ENCODE measurements at regions of chr21 and their contacts with region 1.

Region 1: DNA sequence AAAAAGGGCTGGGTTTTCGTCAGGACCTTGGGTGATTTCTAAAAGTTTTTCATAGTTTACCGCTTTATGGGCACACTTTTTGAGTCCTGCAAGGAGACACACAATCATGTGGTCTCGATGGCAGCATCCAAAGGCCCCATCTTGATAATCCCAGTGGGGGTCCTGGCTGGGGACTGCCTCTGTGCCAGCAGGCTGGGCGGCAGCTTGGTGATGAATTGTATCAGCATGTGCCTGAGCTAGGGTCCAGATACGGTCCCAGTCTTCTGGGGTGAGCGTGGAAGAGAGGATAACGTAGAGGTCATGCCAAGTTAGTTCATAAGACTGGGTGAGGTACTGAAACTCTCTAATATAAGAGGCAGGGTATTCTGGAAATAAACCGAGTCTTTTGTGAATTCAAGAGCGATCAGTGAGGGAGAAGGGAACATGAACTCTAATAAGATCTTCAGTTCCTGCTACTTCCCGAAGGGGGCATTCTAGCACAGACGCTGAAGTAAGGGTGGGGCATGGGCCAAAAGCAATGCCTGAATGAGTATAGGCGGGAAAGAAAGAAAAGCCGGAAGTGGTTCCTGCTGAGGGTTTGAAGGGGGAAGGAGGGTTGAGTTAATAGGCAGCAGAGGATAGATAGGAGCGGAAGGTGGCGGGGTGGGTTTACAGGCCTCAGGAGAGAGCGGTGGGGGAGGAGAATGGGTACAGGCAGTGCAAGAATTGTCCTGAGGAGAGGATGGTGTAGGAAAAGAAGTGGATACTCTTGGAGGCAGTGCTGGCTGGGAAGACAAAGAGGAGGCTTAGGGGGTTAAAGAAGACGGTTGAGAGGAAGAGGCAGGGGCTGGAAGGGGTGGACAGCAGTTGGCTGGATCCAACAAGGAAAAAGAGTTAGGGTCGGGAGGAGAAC is 1.6 kb downstream of the ERVH48-1 start:
- DNase-seq: peak; percentile 77 to 82
- H3K4me3 ChIP-seq: no peak overlapping the region
- H3K27ac ChIP-seq: no peak overlapping the region
- H3K4me1 ChIP-seq: peaks cover 5 to 6% of the 10 kb centered on the region in 2 donors
- H3K27me3 ChIP-seq: no peaks in the 10 kb centered on the region
- CTCF ChIP-seq: peak; percentile 40 to 98 (median 86)
- POLR2A ChIP-seq: no peak

Region 2: DNA sequence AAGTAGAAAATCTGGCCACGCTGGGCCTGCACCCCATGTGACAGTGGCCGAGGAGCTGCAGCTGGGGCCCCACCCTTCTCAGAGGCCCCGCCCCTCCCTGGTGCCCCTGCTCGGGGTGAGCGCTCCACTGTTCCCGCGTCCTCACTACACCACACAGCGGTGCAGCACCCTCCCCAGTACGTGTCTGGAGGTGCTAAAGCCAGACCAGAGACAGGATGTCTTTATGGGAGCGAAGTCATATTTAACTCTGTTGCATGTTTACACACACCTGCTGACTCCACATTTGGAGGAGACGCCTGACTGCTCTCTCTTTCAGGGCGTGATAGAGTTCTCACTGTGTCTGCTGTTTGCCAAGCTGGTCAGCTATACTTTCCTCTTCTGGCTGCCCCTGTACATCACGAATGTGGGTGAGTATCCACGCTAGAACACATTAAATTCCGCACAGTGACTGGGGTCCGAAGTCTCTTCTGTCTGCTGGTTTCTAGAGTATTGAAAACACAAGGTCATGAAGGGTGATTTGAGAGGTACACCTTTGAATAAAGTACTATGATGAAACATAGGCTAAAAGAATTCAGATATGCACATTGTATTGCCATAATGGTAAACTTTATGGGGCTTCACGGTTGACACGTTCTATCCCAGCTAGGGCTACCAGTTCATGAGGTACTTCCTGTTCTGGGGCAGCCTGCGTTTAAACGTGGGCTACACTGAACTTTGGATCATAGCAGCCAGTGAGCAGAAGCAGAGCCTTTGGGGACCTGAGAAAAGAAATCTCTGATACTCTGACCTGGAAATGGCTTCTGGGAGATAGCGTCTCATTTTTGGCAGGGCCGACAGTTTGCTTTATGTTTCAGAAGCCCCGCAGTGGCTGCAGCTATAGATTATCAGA is 361.8 kb before region 1 on chr21:
- intact Hi-C with region 1: no loop called
- DNase-seq: no peak
- H3K4me3 ChIP-seq: no peak overlapping the region
- H3K27ac ChIP-seq: no peak overlapping the region
- H3K4me1 ChIP-seq: peaks cover 6% of the 10 kb centered on the region in 2 donors
- H3K27me3 ChIP-seq: no peaks in the 10 kb centered on the region
- CTCF ChIP-seq: no peak
- POLR2A ChIP-seq: no peak

Region 3: GRCh38 chr21:42781150-42781970 is 142.4 kb before region 1 on chr21:
- intact Hi-C with region 1: no loop called
- DNase-seq: peak; percentile 58 to 72
- H3K4me3 ChIP-seq: no peak overlapping the region
- H3K27ac ChIP-seq: no peak overlapping the region
- H3K4me1 ChIP-seq: peaks cover 3 to 29% of the 10 kb centered on the region in 2 donors
- H3K27me3 ChIP-seq: no peaks in the 10 kb centered on the region
- CTCF ChIP-seq: no peak
- POLR2A ChIP-seq: no peak

Region 4: DNA sequence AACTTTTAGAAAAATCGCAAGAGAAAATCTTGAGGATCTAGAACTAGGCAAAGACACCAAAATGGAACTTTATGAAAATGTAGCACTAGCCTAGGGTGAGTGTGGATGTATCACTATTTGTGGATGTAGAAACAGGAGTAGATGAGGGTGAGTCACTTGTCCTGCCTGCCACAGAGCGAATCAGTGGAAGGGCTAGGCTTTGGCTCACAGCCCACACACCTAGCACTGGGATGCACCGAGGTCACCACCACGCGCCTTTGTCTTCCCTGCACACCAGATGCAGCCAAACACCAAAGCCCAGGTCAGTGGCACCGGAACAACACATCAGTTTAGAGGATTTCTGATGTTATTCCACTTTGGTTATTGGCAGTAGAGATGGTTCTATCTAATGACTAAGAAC is 88.8 kb after region 1 on chr21:
- intact Hi-C with region 1: loop called (anchors 10 kb)
- DNase-seq: no peak
- H3K4me3 ChIP-seq: no peak overlapping the region
- H3K27ac ChIP-seq: no peak overlapping the region
- H3K4me1 ChIP-seq: peaks cover 18 to 19% of the 10 kb centered on the region in 2 donors
- H3K27me3 ChIP-seq: no peaks in the 10 kb centered on the region
- CTCF ChIP-seq: no peak
- POLR2A ChIP-seq: no peak